ENCODE measurements at regions of chr11 and their contacts with region 1.

Region 1: GRCh38 chr11:30346068-30346688 is 23.3 kb downstream of the ARL14EP start:
- DNase-seq: no peak
- H3K4me3 ChIP-seq: no peak overlapping the region
- H3K27ac ChIP-seq: no peak overlapping the region
- H3K4me1 ChIP-seq: no peaks in the 10 kb centered on the region
- H3K27me3 ChIP-seq: no peaks in the 10 kb centered on the region
- CTCF ChIP-seq: peak; percentile 47 to 80 (median 67)
- POLR2A ChIP-seq: no peak

Region 2: GRCh38 chr11:30260813-30261212 is 85.4 kb before region 1 on chr11:
- intact Hi-C with region 1: no loop called
- DNase-seq: no peak
- H3K4me3 ChIP-seq: no peak overlapping the region
- H3K27ac ChIP-seq: no peak overlapping the region
- H3K4me1 ChIP-seq: no peaks in the 10 kb centered on the region
- H3K27me3 ChIP-seq: no peaks in the 10 kb centered on the region
- CTCF ChIP-seq: no peak
- POLR2A ChIP-seq: no peak

Region 3: DNA sequence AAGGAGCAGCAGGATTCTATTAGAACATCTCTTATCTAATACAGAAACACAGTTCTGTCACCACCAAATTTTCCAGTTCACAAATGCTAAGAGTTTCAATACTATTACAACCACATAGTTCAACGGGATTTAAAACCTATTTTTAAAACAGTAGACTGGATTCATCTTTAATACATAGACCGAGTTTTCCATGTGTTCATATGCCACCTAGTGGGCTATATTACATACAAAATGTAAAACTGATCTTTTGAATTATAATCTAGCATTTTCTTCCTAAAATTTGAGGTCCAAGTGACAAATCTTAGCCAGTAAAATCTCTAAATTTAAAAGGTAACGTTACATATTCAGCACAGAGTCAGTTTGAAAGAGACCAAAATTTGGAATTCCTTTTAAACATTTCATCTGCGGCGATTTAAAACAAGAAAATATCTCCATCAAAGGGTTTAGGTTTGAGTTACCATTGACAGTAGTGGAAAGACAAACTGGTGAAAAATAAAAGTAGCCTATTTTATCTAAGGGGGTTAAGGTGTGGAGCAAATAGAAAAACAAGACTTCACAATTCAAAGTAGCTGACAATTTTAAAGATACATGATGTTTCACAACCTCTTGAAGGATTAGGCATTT is 509.3 kb after region 1 on chr11:
- intact Hi-C with region 1: loop called (anchors 5 to 10 kb)
- DNase-seq: no peak
- H3K4me3 ChIP-seq: no peak overlapping the region
- H3K27ac ChIP-seq: no peak overlapping the region
- H3K4me1 ChIP-seq: no peaks in the 10 kb centered on the region
- H3K27me3 ChIP-seq: no peaks in the 10 kb centered on the region
- CTCF ChIP-seq: peak; percentile 40 to 67 (median 54)
- POLR2A ChIP-seq: no peak

Measured in adrenal gland (tissue), 19 donors.